Endothelial cell of umbilical vein (primary cell): ENCODE measurements at regions of chr2 and their contacts with region 1.

Region 1: DNA sequence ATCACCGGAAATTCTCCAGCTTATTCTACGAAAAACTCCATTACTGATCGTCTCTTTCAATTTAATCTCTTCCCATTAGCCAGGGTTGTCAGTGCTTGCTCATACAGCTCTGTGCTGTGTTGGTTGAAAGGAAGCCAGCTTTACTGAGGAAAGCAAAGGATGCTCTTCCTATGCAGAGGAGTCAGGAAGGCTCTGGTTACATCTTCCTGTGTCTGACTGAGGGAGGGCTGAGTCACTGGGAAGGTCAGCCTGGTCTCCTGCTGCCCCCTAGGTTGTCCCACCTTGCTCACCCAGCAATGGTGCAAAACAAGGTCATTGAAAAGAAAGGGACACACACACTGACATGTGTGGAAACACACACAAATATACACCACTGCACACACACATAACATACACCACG is 975.6 kb downstream of the DCDC2C start:
- DNase-seq: no peak
- H3K4me3 ChIP-seq: no peak overlapping the region
- H3K27ac ChIP-seq: no peak overlapping the region
- H3K4me1 ChIP-seq: peaks cover 6% of the 10 kb centered on the region
- H3K27me3 ChIP-seq: no peaks in the 10 kb centered on the region
- CTCF ChIP-seq: no peak
- POLR2A ChIP-seq: no peak

Region 2: GRCh38 chr2:4662161-4662779 is 16.7 kb before region 1 on chr2:
- CTCF ChIA-PET with region 1: interaction called, 3 read pairs
- POLR2A ChIA-PET with region 1: no interaction called
- dilution Hi-C with region 1: no loop called
- intact Hi-C with region 1: loop called (anchors 1 kb)
- DNase-seq: peak; percentile 88
- H3K4me3 ChIP-seq: no peak overlapping the region
- H3K27ac ChIP-seq: peak overlapping the region; percentile 91
- H3K4me1 ChIP-seq: peaks cover 18% of the 10 kb centered on the region
- H3K27me3 ChIP-seq: no peaks in the 10 kb centered on the region
- CTCF ChIP-seq: no peak
- POLR2A ChIP-seq: no peak

Region 3: GRCh38 chr2:4668381-4668780 is 10.5 kb before region 1 on chr2:
- CTCF ChIA-PET with region 1: interaction called, 3 read pairs
- POLR2A ChIA-PET with region 1: no interaction called
- dilution Hi-C with region 1: no loop called
- intact Hi-C with region 1: loop called (anchors 1 kb)
- DNase-seq: peak; percentile 91
- H3K4me3 ChIP-seq: peak overlapping the region in 1 of 3 experiments; percentile 11
- H3K27ac ChIP-seq: peak overlapping the region; percentile 44
- H3K4me1 ChIP-seq: peaks cover 4% of the 10 kb centered on the region
- H3K27me3 ChIP-seq: no peaks in the 10 kb centered on the region
- CTCF ChIP-seq: no peak
- POLR2A ChIP-seq: no peak

Region 4: DNA sequence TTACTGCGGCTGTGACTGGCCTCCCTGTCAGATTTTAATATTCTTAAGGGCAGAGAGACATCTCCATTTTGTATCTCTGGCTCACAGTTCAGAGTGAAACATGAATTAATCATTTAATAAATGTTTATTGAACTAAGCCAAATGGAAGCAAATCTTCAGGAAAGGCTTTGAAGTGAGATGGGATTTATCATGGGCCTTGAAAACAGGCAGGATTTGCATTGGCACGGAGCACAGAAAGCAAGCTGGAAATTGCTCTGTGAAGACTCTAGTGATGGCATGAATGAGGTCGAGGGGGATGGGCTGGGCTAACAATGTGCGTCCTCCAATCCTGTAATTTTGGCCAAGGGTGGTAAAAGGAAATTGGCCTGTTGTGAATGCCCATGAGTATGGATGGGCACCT is 643.5 kb after region 1 on chr2:
- CTCF ChIA-PET with region 1: no interaction called
- POLR2A ChIA-PET with region 1: no interaction called
- dilution Hi-C with region 1: no loop called
- intact Hi-C with region 1: no loop called
- DNase-seq: no peak
- H3K4me3 ChIP-seq: no peak overlapping the region
- H3K27ac ChIP-seq: no peak overlapping the region
- H3K4me1 ChIP-seq: no peaks in the 10 kb centered on the region
- H3K27me3 ChIP-seq: no peaks in the 10 kb centered on the region
- CTCF ChIP-seq: no peak
- POLR2A ChIP-seq: no peak